Left ventricle myocardium inferior (tissue), 1 donor: ENCODE measurements at regions of chr19 and their contacts with region 1.

Region 1: GRCh38 chr19:664913-665443 is 2.0 kb upstream of the RNF126 start:
- DNase-seq: peak; percentile 82
- H3K4me3 ChIP-seq: peak overlapping the region; percentile 50
- H3K27ac ChIP-seq: peak overlapping the region; percentile 37
- H3K4me1 ChIP-seq: peaks cover 50% of the 10 kb centered on the region
- H3K27me3 ChIP-seq: no peaks in the 10 kb centered on the region
- CTCF ChIP-seq: peak; percentile 98

Region 2: GRCh38 chr19:732148-733069 is 67.4 kb after region 1 on chr19:
- intact Hi-C with region 1: loop called (anchors 5 kb)
- DNase-seq: no peak
- H3K4me3 ChIP-seq: no peak overlapping the region
- H3K27ac ChIP-seq: no peak overlapping the region
- H3K4me1 ChIP-seq: peaks cover 43% of the 10 kb centered on the region
- H3K27me3 ChIP-seq: no peaks in the 10 kb centered on the region
- CTCF ChIP-seq: no peak

Region 3: GRCh38 chr19:771332-771785 is 106.4 kb after region 1 on chr19:
- intact Hi-C with region 1: no loop called
- DNase-seq: no peak
- H3K4me3 ChIP-seq: no peak overlapping the region
- H3K27ac ChIP-seq: no peak overlapping the region
- H3K4me1 ChIP-seq: peaks cover 10% of the 10 kb centered on the region
- H3K27me3 ChIP-seq: peaks cover 18% of the 10 kb centered on the region
- CTCF ChIP-seq: peak; percentile 69